ENCODE measurements at regions of chr19 and their contacts with region 1.

Region 1: DNA sequence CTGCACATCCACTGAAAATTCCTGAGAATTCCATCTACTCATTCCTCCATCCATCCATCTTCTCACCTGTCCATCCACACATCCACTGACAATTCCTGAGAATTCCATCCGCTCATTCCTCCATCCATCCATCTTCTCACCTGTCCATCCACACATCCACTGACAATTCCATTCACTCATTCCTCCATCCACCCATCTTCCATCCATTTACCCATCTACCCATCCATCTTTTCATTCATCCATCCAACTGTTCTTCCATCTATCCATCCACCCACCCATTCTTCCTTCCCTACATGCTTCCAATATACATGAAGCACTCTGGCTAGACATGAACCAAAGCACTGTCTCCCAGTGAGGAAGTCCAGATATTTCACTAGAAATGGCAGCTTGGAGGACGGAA is 15.6 kb downstream of the TRPM4 start:
- DNase-seq: no peak
- ATAC-seq: no peak
- H3K4me3 ChIP-seq: no peak overlapping the region
- H3K4me3 Mint-ChIP-seq: no peak overlapping the region
- H3K27ac ChIP-seq: no peak overlapping the region
- H3K27ac Mint-ChIP-seq: no peak overlapping the region
- H3K4me1 ChIP-seq: no peaks in the 10 kb centered on the region
- H3K4me1 Mint-ChIP-seq: peaks cover 3% of the 10 kb centered on the region
- H3K27me3 ChIP-seq: peaks cover 3 to 4% of the 10 kb centered on the region in 2 experiments
- H3K27me3 Mint-ChIP-seq: peaks cover 17% of the 10 kb centered on the region
- CTCF ChIP-seq: no peak

Region 2: GRCh38 chr19:49287141-49287770 is 114.1 kb after region 1 on chr19:
- CTCF ChIA-PET with region 1: no interaction called
- POLR2A ChIA-PET with region 1: no interaction called
- intact Hi-C with region 1: loop called in 1 of 2 experiments (anchors 10 kb)
- DNase-seq: no peak
- ATAC-seq: no peak
- H3K4me3 ChIP-seq: no peak overlapping the region
- H3K4me3 Mint-ChIP-seq: no peak overlapping the region
- H3K27ac ChIP-seq: no peak overlapping the region
- H3K27ac Mint-ChIP-seq: no peak overlapping the region
- H3K4me1 ChIP-seq: no peaks in the 10 kb centered on the region
- H3K4me1 Mint-ChIP-seq: no peaks in the 10 kb centered on the region
- H3K27me3 ChIP-seq: no peaks in the 10 kb centered on the region
- H3K27me3 Mint-ChIP-seq: no peaks in the 10 kb centered on the region
- CTCF ChIP-seq: no peak

Measured in CD4-positive, alpha-beta T cell (primary cell).